Right cardiac atrium (tissue), 5 donors: ENCODE measurements at regions of chr3 and their contacts with region 1.

Region 1: GRCh38 chr3:27312044-27312668 is 57.0 kb downstream of the NEK10 start:
- DNase-seq: no peak
- ATAC-seq: peak; percentile 43 to 55
- H3K4me3 ChIP-seq: no peak overlapping the region
- H3K27ac ChIP-seq: no peak overlapping the region
- H3K4me1 ChIP-seq: no peaks in the 10 kb centered on the region
- H3K27me3 ChIP-seq: no peaks in the 10 kb centered on the region

Region 2: GRCh38 chr3:27467545-27467944 is 155.4 kb after region 1 on chr3:
- intact Hi-C with region 1: loop called in 2 of 4 experiments (anchors 5 to 10 kb)
- DNase-seq: no peak
- ATAC-seq: peak; percentile 66 to 80
- H3K4me3 ChIP-seq: no peak overlapping the region
- H3K27ac ChIP-seq: no peak overlapping the region
- H3K4me1 ChIP-seq: no peaks in the 10 kb centered on the region
- H3K27me3 ChIP-seq: no peaks in the 10 kb centered on the region

Region 3: GRCh38 chr3:27507515-27508202 is 195.5 kb after region 1 on chr3:
- intact Hi-C with region 1: no loop called
- DNase-seq: no peak
- ATAC-seq: no peak
- H3K4me3 ChIP-seq: no peak overlapping the region
- H3K27ac ChIP-seq: no peak overlapping the region
- H3K4me1 ChIP-seq: peaks cover 1% of the 10 kb centered on the region
- H3K27me3 ChIP-seq: no peaks in the 10 kb centered on the region

Region 4: GRCh38 chr3:27659279-27660021 is 347.3 kb after region 1 on chr3:
- intact Hi-C with region 1: loop called in 1 of 4 experiments (anchors 10 kb)
- DNase-seq: peak; percentile 53 to 85 (median 81)
- ATAC-seq: peak; percentile 51 to 78
- H3K4me3 ChIP-seq: no peak overlapping the region
- H3K27ac ChIP-seq: no peak overlapping the region
- H3K4me1 ChIP-seq: no peaks in the 10 kb centered on the region
- H3K27me3 ChIP-seq: no peaks in the 10 kb centered on the region

Region 5: GRCh38 chr3:27681245-27681748 is 369.1 kb after region 1 on chr3:
- intact Hi-C with region 1: loop called in 3 of 4 experiments (anchors 10 kb)
- DNase-seq: no peak
- ATAC-seq: peak; percentile 53 to 75
- H3K4me3 ChIP-seq: no peak overlapping the region
- H3K27ac ChIP-seq: no peak overlapping the region
- H3K4me1 ChIP-seq: peaks cover 3% of the 10 kb centered on the region
- H3K27me3 ChIP-seq: no peaks in the 10 kb centered on the region